Activated CD4-positive, alpha-beta memory T cell treated with anti-CD3 and anti-CD28 coated beads, Interleukin-2, amount 10 ng/mL, durations not matched to agents 7 days and 5 days (primary cell): ENCODE measurements at regions of chr7 and their contacts with region 1.

Region 1: DNA sequence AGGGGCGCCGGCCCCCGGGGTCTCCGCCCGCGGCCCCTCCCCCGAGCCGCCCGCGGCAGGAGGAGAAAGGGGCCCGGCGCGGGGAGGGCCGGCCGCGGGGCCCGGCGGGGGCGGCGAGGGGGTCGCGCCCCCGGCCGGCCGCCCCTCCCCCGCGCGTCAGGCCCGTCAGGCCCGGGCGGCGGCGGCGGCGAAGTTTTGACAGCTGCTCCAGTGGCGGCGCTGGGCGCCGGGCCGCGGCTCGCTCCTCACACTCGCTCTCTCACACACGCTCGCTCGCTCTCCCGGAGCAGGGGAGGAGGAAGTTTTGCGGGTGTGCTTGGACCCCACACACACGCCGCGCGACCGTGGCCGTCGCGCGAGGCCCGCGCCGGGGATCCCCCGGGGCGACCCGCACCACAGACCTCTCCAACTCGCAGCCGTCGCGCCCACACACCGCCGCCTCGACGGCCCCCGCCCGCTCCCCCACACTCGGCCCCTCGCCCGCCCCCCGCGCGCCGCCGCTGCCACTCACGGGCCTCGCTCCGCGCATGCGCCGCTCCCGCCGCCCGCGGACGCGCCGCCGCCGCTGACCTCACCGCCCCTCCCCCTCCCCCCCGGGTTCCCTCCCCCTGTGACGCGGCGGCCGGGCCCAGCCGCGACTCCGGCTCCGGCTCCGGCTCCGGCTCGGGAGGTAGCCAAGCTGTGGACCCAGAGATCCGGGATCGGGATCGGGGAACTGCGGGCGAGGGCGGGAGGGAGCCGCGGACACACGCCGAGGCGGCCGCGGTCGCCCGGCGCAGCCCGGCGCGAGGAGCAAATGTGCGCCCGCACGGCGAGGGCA is 518 bp upstream of the KMT2C start:
- DNase-seq: peak; percentile 90
- H3K4me3 Mint-ChIP-seq: peak overlapping the region; percentile 74
- H3K27ac Mint-ChIP-seq: peak overlapping the region; percentile 81
- H3K4me1 Mint-ChIP-seq: peaks cover 24% of the 10 kb centered on the region
- H3K27me3 Mint-ChIP-seq: no peaks in the 10 kb centered on the region

Region 2: DNA sequence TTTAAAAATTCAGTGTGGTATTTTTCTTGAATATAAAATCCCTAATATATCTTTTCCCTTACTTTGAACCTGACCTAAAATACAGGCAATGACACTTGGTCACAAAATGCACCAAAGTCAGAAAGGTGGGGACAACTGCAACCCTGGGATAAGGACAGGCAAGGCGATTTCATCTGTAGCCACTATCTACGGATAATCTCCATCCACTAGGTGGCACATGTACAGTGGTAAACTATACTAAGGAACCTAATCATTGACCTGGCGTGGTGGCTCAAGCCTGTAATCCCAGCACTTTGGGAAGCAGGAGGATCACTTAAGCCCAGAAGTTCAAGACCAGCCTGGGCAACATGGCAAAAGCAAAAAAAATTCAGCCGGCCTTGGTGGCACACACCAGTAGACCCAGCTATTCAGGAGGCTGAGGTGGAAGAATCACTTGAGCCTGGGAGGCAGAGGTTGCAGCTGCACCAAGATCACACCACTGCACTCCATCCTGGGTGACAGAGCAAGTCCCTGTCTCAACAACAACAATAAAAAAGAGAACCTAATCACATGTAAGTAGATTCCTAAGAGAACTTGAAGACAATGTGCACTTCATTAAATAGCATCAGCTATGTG is 99.5 kb before region 1 on chr7:
- CTCF ChIA-PET with region 1: interaction called, 16 read pairs
- POLR2A ChIA-PET with region 1: interaction called, 3 read pairs
- DNase-seq: no peak
- H3K4me3 Mint-ChIP-seq: no peak overlapping the region
- H3K27ac Mint-ChIP-seq: peak overlapping the region; percentile 4
- H3K4me1 Mint-ChIP-seq: peaks cover 29% of the 10 kb centered on the region
- H3K27me3 Mint-ChIP-seq: no peaks in the 10 kb centered on the region

Region 3: GRCh38 chr7:152347888-152348287 is 88.4 kb before region 1 on chr7:
- CTCF ChIA-PET with region 1: no interaction called
- POLR2A ChIA-PET with region 1: no interaction called
- DNase-seq: no peak
- H3K4me3 Mint-ChIP-seq: no peak overlapping the region
- H3K27ac Mint-ChIP-seq: no peak overlapping the region
- H3K4me1 Mint-ChIP-seq: peaks cover 9% of the 10 kb centered on the region
- H3K27me3 Mint-ChIP-seq: no peaks in the 10 kb centered on the region

Region 4: DNA sequence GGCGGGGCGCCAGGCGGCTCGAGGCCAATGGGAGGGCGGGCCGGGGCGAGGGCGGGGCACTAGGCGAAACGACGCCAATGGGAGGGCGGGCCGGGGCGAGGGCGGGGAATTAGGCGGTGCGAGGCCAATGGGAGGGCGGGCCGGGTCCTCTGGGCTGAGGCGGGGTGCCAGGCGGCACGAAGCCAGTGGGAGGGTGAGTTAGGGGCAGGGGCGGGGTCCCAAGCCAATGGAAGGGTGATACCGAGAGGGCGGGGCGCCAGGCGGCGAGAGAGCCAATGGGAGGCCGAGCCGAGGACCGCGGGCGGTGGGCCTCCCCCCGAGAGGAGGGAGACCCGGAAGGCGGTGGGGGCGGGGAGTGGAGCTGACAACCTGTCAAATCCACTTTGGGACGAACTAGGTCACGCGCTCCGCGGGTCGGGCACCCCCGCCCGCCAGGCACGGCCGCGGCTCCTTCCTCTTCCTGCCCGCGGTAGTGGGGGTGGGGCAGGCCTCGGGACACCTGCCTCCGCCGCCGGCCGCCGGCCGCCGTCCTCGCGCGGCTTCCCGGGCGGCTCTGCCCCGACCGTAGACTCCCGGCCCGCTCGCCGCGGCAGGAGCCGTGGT is 27.5 kb after region 1 on chr7:
- CTCF ChIA-PET with region 1: interaction called, 4 read pairs
- POLR2A ChIA-PET with region 1: interaction called, 44 read pairs
- DNase-seq: peak; percentile 100
- H3K4me3 Mint-ChIP-seq: peak overlapping the region; percentile 89
- H3K27ac Mint-ChIP-seq: no peak overlapping the region
- H3K4me1 Mint-ChIP-seq: peaks cover 10% of the 10 kb centered on the region
- H3K27me3 Mint-ChIP-seq: no peaks in the 10 kb centered on the region

Region 5: GRCh38 chr7:152654971-152655370 is 218.7 kb after region 1 on chr7:
- CTCF ChIA-PET with region 1: no interaction called
- POLR2A ChIA-PET with region 1: no interaction called
- DNase-seq: no peak
- H3K4me3 Mint-ChIP-seq: no peak overlapping the region
- H3K27ac Mint-ChIP-seq: no peak overlapping the region
- H3K4me1 Mint-ChIP-seq: no peaks in the 10 kb centered on the region
- H3K27me3 Mint-ChIP-seq: no peaks in the 10 kb centered on the region

Region 6: GRCh38 chr7:152675759-152676636 is 239.7 kb after region 1 on chr7 and contains the start of gene XRCC2:
- CTCF ChIA-PET with region 1: no interaction called
- POLR2A ChIA-PET with region 1: interaction called, 12 read pairs
- DNase-seq: peak; percentile 94
- H3K4me3 Mint-ChIP-seq: peak within 1 kb of the TSS; percentile 98
- H3K27ac Mint-ChIP-seq: peak within 1 kb of the TSS; percentile 92
- H3K4me1 Mint-ChIP-seq: peaks cover 23% of the 10 kb centered on the region
- H3K27me3 Mint-ChIP-seq: no peaks in the 10 kb centered on the region
- total RNA-seq, gene XRCC2: 9.6 to 9.7 TPM